ENCODE measurements at regions of chr16 and their contacts with region 1.

Region 1: GRCh38 chr16:10964039-10964890 is 19.9 kb downstream of the CLEC16A start:
- DNase-seq: no peak
- ATAC-seq: peak; percentile 62
- H3K4me3 ChIP-seq: peak overlapping the region; percentile 18; the same call in 1 of the 2 replicates
- H3K27ac ChIP-seq: peak overlapping the region; percentile 99
- H3K4me1 ChIP-seq: peaks cover 35% of the 10 kb centered on the region
- H3K27me3 ChIP-seq: no peaks in the 10 kb centered on the region
- CTCF ChIP-seq: peak; percentile 94 to 98 (median 98); a peak in 5 of 6 replicates
- EP300 ChIP-seq: peak; percentile 35 to 38; a peak in 2 of 4 replicates
- POLR2A ChIP-seq: peak; percentile 34; the same call in 1 of the 2 replicates
- RAD21 ChIP-seq: peak; percentile 87

Region 2: DNA sequence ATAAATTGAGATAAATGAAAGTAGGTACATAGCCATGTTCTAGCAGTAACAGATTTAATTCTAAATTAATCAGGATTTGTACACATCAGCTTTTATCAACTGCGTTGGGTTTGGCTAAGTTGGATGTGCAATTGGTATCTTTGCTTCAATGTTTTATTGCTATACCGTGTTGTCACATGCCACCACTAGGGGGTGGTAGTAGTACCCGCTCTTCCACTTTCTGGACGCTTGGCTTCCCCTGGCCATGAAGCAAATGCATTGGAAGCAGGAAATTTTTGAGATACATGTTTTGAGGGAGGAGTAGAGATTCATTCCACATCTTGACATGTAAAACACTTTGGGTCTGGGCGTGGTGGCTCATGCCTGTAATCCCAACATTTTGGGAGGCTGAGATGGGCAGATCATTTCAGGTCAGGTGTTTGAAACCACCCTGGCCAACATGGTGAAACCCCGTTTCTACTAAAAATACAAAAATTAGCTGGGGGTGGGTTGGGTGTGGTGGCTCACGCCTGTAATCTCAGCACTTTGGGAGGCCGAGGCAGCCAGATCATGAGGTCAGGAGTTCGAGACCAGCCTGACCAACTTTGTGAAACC is 442.5 kb before region 1 on chr16:
- CTCF ChIA-PET with region 1: no interaction called
- POLR2A ChIA-PET with region 1: no interaction called
- RAD21 ChIA-PET with region 1: no interaction called
- SMC1A ChIA-PET with region 1: no interaction called
- in situ Hi-C with region 1: no loop called
- intact Hi-C with region 1: no loop called
- DNase-seq: no peak
- ATAC-seq: peak; percentile 91
- H3K4me3 ChIP-seq: no peak overlapping the region
- H3K27ac ChIP-seq: no peak overlapping the region
- H3K4me1 ChIP-seq: no peaks in the 10 kb centered on the region
- H3K27me3 ChIP-seq: no peaks in the 10 kb centered on the region
- CTCF ChIP-seq: peak; percentile 78 to 86 (median 81)
- EP300 ChIP-seq: no peak
- POLR2A ChIP-seq: no peak
- RAD21 ChIP-seq: peak; percentile 81

Region 3: DNA sequence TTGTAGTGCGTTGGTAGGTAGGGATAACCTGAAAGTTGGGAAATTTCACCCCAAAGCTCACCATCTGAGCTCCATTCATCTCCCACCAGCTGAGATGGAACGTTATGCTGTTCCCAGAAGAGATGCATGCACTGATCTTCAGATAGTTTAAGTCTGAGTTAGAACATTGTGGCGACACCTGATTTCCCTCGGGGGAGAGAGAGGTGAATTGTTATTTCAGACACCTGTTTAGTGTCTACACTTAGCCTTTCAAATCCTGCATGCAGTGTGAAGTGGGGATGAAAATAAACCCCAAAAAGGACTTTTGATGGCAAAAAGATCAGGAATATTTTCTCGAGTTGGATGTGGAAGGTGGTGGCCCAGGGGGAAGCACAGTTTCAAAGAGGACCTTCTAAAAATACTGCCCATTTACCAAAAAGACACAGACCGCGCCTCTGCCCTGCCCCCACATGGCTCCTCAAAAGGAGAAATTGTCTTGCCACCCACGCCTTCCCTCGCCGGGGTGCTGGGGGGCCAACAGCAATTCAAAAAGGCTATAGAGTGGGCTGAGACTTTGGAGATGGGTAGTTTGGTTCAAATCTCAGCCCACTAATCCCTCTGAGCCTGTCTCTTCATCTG is 75.8 kb before region 1 on chr16:
- CTCF ChIA-PET with region 1: no interaction called
- POLR2A ChIA-PET with region 1: no interaction called
- RAD21 ChIA-PET with region 1: no interaction called
- SMC1A ChIA-PET with region 1: no interaction called
- in situ Hi-C with region 1: no loop called
- intact Hi-C with region 1: no loop called
- DNase-seq: no peak
- ATAC-seq: peak; percentile 7; the same call in 1 of the 3 replicates
- H3K4me3 ChIP-seq: peak overlapping the region; percentile 67
- H3K27ac ChIP-seq: peak overlapping the region; percentile 59
- H3K4me1 ChIP-seq: peaks cover 96% of the 10 kb centered on the region
- H3K27me3 ChIP-seq: no peaks in the 10 kb centered on the region
- CTCF ChIP-seq: no peak
- EP300 ChIP-seq: no peak; a peak in 1 of 4 replicates
- POLR2A ChIP-seq: no peak
- RAD21 ChIP-seq: 0 out of 2 replicates have a peak, but pooled peaks have one; percentile 17

Region 4: GRCh38 chr16:10981697-10982216 is 17.5 kb after region 1 on chr16:
- CTCF ChIA-PET with region 1: interaction called, 61 read pairs
- POLR2A ChIA-PET with region 1: interaction called, 15 read pairs
- RAD21 ChIA-PET with region 1: interaction called, 47 read pairs
- SMC1A ChIA-PET with region 1: interaction called, 48 read pairs
- in situ Hi-C with region 1: no loop called
- intact Hi-C with region 1: loop called (anchors 1 kb)
- DNase-seq: no peak
- ATAC-seq: peak; percentile 94
- H3K4me3 ChIP-seq: no peak overlapping the region
- H3K27ac ChIP-seq: peak overlapping the region; percentile 55; the same call in 1 of the 2 replicates
- H3K4me1 ChIP-seq: peaks cover 20% of the 10 kb centered on the region
- H3K27me3 ChIP-seq: no peaks in the 10 kb centered on the region
- CTCF ChIP-seq: peak; percentile 78 to 85 (median 80)
- EP300 ChIP-seq: peak in 1 of 2 experiments; percentile 64; a peak in 1 of 4 replicates
- POLR2A ChIP-seq: no peak
- RAD21 ChIP-seq: peak; percentile 54

Region 5: DNA sequence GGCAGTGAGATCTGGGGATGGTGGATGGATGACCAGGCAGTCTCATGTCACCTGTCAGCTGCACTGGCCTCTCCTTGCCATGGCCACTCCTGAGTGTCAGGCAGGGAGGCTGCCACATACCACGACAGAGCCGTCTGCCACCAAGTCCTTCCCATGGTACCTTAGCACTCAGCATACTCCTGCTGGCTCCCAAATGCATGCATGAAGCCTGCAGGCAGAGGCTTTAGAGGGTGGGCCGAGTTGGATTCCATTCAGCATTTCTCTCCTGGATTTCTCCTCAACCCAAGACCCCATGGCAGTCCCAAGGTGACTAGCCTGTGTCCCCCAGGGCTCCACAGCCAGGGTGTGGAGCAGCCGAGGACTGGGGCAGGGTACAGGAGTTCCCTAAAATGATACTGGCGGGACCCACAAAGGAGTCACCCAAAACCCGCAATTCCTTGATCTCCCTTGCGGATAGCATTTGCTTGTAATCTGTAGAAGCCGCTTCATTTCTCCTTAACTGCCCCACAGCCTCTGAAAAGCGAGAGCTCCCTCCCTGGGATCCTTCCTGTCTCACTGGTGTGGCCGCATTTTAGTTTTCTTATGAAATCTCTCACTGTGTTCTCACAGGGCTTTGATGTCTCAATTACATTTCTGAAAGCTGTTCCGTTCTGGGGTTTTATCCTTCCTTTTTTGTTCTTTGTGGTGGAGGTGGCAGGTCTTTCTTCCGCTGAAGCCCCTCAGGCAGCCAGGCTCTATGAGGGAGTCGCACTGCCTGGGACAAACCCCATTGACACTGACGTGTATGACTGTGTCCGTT is 150.3 kb after region 1 on chr16:
- CTCF ChIA-PET with region 1: interaction called, 3 read pairs
- POLR2A ChIA-PET with region 1: no interaction called
- RAD21 ChIA-PET with region 1: interaction called, 13 read pairs
- SMC1A ChIA-PET with region 1: interaction called, 5 read pairs
- in situ Hi-C with region 1: no loop called
- intact Hi-C with region 1: no loop called
- DNase-seq: no peak
- ATAC-seq: no peak
- H3K4me3 ChIP-seq: no peak overlapping the region
- H3K27ac ChIP-seq: peak overlapping the region; percentile 52
- H3K4me1 ChIP-seq: peaks cover 39% of the 10 kb centered on the region
- H3K27me3 ChIP-seq: no peaks in the 10 kb centered on the region
- CTCF ChIP-seq: no peak
- EP300 ChIP-seq: no peak
- POLR2A ChIP-seq: no peak
- RAD21 ChIP-seq: no peak

Region 6: DNA sequence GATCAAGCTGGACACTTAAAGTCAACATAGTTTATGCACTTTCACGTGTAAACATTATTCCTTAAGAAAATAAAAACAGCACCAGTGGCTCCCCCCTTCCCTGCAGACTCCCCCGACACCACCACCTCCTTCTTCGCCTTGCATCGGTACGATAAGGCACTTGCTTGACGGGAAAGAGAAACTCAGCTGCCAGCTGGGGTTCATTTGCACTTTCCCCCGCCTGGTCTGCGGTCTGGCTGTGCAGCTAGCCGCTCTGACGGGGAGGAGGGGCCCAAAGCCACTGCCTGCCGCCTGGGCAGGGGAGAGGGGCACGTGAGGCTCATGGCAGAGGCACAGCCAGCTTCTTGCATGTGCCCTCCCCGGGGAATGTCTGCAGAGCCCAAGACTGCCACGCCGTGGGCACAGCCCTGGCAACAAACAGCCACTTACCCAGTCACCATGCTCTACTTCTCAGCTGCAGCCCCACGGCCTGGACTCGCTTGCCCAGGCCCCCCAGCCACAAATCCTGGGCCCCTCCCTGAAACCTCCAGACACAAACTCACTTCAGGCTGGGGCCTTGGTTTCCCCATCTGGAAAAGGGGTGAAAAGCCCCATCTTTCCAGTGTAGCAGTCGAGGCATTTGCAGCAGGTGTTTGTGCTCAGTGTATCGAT is 333.4 kb after region 1 on chr16:
- CTCF ChIA-PET with region 1: interaction called, 6 read pairs
- POLR2A ChIA-PET with region 1: no interaction called
- RAD21 ChIA-PET with region 1: interaction called, 55 read pairs
- SMC1A ChIA-PET with region 1: interaction called, 20 read pairs
- in situ Hi-C with region 1: no loop called
- intact Hi-C with region 1: loop called (anchors 2 kb)
- DNase-seq: peak; percentile 92
- ATAC-seq: peak; percentile 91
- H3K4me3 ChIP-seq: peak overlapping the region; percentile 30; the same call in 1 of the 2 replicates
- H3K27ac ChIP-seq: peak overlapping the region; percentile 91
- H3K4me1 ChIP-seq: peaks cover 57% of the 10 kb centered on the region
- H3K27me3 ChIP-seq: no peaks in the 10 kb centered on the region
- CTCF ChIP-seq: peak in 1 of 3 experiments; percentile 26; a peak in 2 of 6 replicates
- EP300 ChIP-seq: peak; percentile 86 to 94
- POLR2A ChIP-seq: peak; percentile 58
- RAD21 ChIP-seq: 0 out of 2 replicates have a peak, but pooled peaks have one; percentile 13

Region 7: GRCh38 chr16:11379420-11379819 is 415.2 kb after region 1 on chr16:
- CTCF ChIA-PET with region 1: interaction called, 6 read pairs
- POLR2A ChIA-PET with region 1: no interaction called
- RAD21 ChIA-PET with region 1: interaction called, 10 read pairs
- SMC1A ChIA-PET with region 1: interaction called, 11 read pairs
- in situ Hi-C with region 1: no loop called
- intact Hi-C with region 1: no loop called
- DNase-seq: peak; percentile 71
- ATAC-seq: peak; percentile 98
- H3K4me3 ChIP-seq: no peak overlapping the region
- H3K27ac ChIP-seq: peak overlapping the region; percentile 41
- H3K4me1 ChIP-seq: peaks cover 12% of the 10 kb centered on the region
- H3K27me3 ChIP-seq: no peaks in the 10 kb centered on the region
- CTCF ChIP-seq: no peak
- EP300 ChIP-seq: peak; percentile 80 to 88
- POLR2A ChIP-seq: 0 out of 2 replicates have a peak, but pooled peaks have one; percentile 30
- RAD21 ChIP-seq: 0 out of 2 replicates have a peak, but pooled peaks have one; percentile 12

Region 8: DNA sequence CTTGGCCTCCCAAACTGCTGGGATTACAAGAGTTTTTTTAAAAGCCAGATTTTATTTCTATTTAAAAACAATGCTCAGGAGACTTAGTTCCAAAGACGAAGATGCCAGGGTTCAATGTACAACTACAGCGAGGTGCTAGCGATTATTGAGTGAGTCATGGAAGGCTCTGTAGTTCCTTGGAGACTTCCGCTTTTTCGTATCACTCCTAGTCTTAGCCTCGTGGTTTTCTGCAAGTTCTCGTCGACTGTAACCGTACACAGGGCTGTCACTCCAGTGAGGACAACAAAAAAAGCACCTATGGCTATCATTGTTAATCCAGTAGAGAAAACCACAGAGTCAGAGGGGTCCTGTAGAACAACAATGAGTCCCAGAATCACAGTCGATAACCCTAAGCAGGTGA is 855.5 kb after region 1 on chr16:
- CTCF ChIA-PET with region 1: no interaction called
- POLR2A ChIA-PET with region 1: no interaction called
- RAD21 ChIA-PET with region 1: no interaction called
- SMC1A ChIA-PET with region 1: no interaction called
- in situ Hi-C with region 1: loop called (anchors 10 kb)
- intact Hi-C with region 1: no loop called
- DNase-seq: no peak
- ATAC-seq: peak; percentile 57
- H3K4me3 ChIP-seq: no peak overlapping the region
- H3K27ac ChIP-seq: no peak overlapping the region
- H3K4me1 ChIP-seq: no peaks in the 10 kb centered on the region
- H3K27me3 ChIP-seq: no peaks in the 10 kb centered on the region
- CTCF ChIP-seq: no peak
- EP300 ChIP-seq: no peak
- POLR2A ChIP-seq: no peak
- RAD21 ChIP-seq: no peak

Measured in GM12878 (cell line).